ENCODE measurements at regions of chr5 and their contacts with region 1.

Region 1: GRCh38 chr5:59039296-59040023 is 456.6 kb downstream of the RAB3C start:
- DNase-seq: peak; percentile 90 to 94 (median 91)
- H3K4me3 ChIP-seq: peak overlapping the region; percentile 84 to 93
- H3K4me3 Mint-ChIP-seq: peak overlapping the region; percentile 89 to 98 (median 96)
- H3K27ac ChIP-seq: peak overlapping the region; percentile 81
- H3K27ac Mint-ChIP-seq: peak overlapping the region; percentile 96 to 99 (median 99)
- H3K4me1 ChIP-seq: peaks cover 64% of the 10 kb centered on the region
- H3K4me1 Mint-ChIP-seq: peaks cover 39 to 79% (median 53%) of the 10 kb centered on the region in 4 donors
- H3K27me3 ChIP-seq: no peaks in the 10 kb centered on the region
- H3K27me3 Mint-ChIP-seq: no peaks in the 10 kb centered on the region

Region 2: GRCh38 chr5:59025734-59026133 is 13.7 kb before region 1 on chr5:
- CTCF ChIA-PET with region 1: interaction called, 4 read pairs
- POLR2A ChIA-PET with region 1: interaction called, 4 read pairs
- intact Hi-C with region 1: loop called (anchors 1 kb)
- DNase-seq: no peak
- H3K4me3 ChIP-seq: no peak overlapping the region
- H3K4me3 Mint-ChIP-seq: no peak overlapping the region
- H3K27ac ChIP-seq: no peak overlapping the region
- H3K27ac Mint-ChIP-seq: peak overlapping the region in 1 of 7 donors; percentile 33
- H3K4me1 ChIP-seq: peaks cover 39% of the 10 kb centered on the region
- H3K4me1 Mint-ChIP-seq: peaks cover 37 to 78% (median 45%) of the 10 kb centered on the region in 4 donors
- H3K27me3 ChIP-seq: no peaks in the 10 kb centered on the region
- H3K27me3 Mint-ChIP-seq: no peaks in the 10 kb centered on the region

Region 3: DNA sequence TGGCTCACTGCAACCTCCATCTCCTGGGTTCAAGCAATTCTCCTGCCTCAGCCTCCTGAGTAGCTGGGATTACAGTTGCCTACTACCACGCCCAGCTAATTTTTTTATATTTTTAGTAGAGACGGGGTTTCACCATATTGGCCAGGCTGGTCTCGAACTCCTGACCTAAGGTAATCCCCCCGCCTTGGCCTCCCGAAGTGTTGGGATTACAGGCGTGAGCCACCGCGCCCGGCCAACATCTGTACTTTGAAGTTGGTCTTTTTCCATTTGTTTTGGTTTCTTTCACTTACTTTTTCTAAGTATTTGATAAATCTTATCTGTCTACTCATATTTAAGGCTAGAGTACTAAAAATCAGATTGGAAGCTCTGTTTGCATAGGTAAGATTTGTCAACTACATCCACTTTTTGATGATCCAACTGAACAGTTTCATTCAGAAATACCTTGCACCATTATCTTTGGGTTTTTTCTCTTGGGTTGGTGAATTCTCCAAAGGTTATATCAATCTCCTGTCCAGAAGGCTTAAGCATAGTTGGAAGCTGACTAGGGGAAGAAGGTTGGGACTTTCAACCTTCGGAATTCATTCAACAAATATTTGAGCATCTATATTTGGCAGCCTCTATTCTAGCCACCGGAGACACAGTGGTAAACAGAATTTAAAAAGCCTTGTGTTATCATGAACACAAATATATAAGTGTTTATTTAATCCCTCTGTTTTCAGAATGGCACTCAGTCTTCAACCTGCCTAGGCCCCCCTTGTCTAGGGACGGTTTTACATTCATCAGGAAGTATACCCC is 32.5 kb after region 1 on chr5:
- CTCF ChIA-PET with region 1: no interaction called
- POLR2A ChIA-PET with region 1: no interaction called
- intact Hi-C with region 1: no loop called
- DNase-seq: no peak
- H3K4me3 ChIP-seq: no peak overlapping the region
- H3K4me3 Mint-ChIP-seq: no peak overlapping the region
- H3K27ac ChIP-seq: no peak overlapping the region
- H3K27ac Mint-ChIP-seq: no peak overlapping the region
- H3K4me1 ChIP-seq: no peaks in the 10 kb centered on the region
- H3K4me1 Mint-ChIP-seq: no peaks in the 10 kb centered on the region
- H3K27me3 ChIP-seq: no peaks in the 10 kb centered on the region
- H3K27me3 Mint-ChIP-seq: peaks cover 3 to 6% of the 10 kb centered on the region in 2 donors

Region 4: GRCh38 chr5:59099270-59099994 is 60.0 kb after region 1 on chr5:
- CTCF ChIA-PET with region 1: interaction called, 4 read pairs
- POLR2A ChIA-PET with region 1: interaction called, 12 read pairs
- intact Hi-C with region 1: loop called (anchors 1 kb)
- DNase-seq: peak; percentile 59 to 82 (median 76)
- H3K4me3 ChIP-seq: no peak overlapping the region
- H3K4me3 Mint-ChIP-seq: peak overlapping the region in 7 of 8 donors; percentile 18 to 57 (median 49)
- H3K27ac ChIP-seq: peak overlapping the region; percentile 33
- H3K27ac Mint-ChIP-seq: peak overlapping the region; percentile 31 to 94 (median 83)
- H3K4me1 ChIP-seq: peaks cover 30% of the 10 kb centered on the region
- H3K4me1 Mint-ChIP-seq: peaks cover 15 to 42% (median 31%) of the 10 kb centered on the region in 4 donors
- H3K27me3 ChIP-seq: no peaks in the 10 kb centered on the region
- H3K27me3 Mint-ChIP-seq: no peaks in the 10 kb centered on the region

Region 5: DNA sequence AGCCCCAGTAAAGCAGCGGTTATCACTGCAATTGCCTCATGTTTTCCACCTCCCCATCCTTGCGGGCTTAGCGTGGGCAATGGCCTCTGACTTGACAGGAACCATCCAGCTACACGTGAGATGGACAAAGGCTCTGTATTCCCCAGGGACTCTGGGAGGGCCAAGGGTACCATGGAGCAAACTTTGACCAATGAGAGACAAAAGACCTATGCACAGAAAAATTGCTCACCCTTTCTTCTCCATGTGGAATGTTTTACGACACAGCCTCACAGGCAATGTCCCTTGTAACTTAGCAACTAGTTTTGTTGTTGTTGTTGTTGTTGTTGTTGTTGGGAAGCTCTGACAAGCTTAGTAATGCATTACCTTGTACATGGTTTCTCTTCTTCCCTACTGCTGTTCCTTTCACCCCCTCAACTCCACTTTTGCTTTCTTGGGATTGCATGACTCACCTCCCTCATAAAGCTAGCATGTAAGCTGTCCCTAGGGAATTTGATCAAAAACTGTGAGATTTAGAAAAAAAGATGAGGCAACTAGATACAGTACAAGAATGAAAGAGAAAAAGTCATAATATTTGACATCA is 94.3 kb after region 1 on chr5:
- CTCF ChIA-PET with region 1: interaction called, 45 read pairs
- POLR2A ChIA-PET with region 1: interaction called, 156 read pairs
- intact Hi-C with region 1: no loop called
- DNase-seq: no peak
- H3K4me3 ChIP-seq: no peak overlapping the region
- H3K4me3 Mint-ChIP-seq: peak overlapping the region in 1 of 8 donors; percentile 43
- H3K27ac ChIP-seq: no peak overlapping the region
- H3K27ac Mint-ChIP-seq: peak overlapping the region in 6 of 7 donors; percentile 59 to 95 (median 86)
- H3K4me1 ChIP-seq: peaks cover 34% of the 10 kb centered on the region
- H3K4me1 Mint-ChIP-seq: peaks cover 10 to 45% (median 13%) of the 10 kb centered on the region in 4 donors
- H3K27me3 ChIP-seq: no peaks in the 10 kb centered on the region
- H3K27me3 Mint-ChIP-seq: peaks cover 0 to 2% of the 10 kb centered on the region in 2 donors

Region 6: DNA sequence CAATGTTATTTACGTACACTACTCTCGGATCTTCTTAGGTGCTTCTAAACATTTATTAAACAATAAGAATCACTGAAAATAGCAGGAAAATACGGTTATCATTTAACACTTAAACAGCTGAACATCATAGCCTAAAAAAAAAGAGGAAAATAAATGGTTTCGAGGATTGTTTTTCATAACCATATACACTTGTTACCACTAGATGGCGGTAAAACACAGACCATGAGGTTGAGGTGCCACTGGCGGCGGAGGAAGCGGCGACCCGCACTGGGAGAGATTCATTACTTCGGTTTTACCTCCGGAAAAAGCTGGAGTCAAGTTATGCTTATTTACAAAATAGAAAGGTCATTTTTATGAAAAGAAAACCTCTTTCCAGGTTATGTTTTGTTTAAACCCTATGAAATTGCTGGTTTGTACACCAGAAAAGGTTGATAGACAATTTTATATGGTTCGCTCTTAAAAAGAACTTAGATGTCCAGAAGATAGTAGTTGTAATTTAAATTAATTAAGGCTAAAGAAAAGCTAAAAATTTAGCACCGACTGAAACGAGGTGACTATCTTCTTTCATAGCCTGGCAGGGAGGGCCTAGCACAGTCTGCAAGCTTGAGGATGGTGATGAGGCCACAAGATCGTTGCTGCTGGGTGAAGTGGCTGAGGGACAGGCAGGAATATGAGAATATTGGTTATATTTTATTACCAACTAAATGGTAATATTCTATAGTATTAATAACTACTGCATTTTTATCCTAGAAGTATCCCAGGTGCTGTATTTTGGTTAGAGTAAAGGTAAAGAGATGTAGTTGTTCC is 149.2 kb after region 1 on chr5:
- CTCF ChIA-PET with region 1: interaction called, 17 read pairs
- POLR2A ChIA-PET with region 1: interaction called, 3 read pairs
- intact Hi-C with region 1: no loop called
- DNase-seq: peak; percentile 55 to 68 (median 66)
- H3K4me3 ChIP-seq: no peak overlapping the region
- H3K4me3 Mint-ChIP-seq: peak overlapping the region in 2 of 8 donors; percentile 23 to 58
- H3K27ac ChIP-seq: no peak overlapping the region
- H3K27ac Mint-ChIP-seq: no peak overlapping the region
- H3K4me1 ChIP-seq: peaks cover 5% of the 10 kb centered on the region
- H3K4me1 Mint-ChIP-seq: peaks cover 3 to 5% (median 4%) of the 10 kb centered on the region in 4 donors
- H3K27me3 ChIP-seq: no peaks in the 10 kb centered on the region
- H3K27me3 Mint-ChIP-seq: peaks cover 13 to 15% of the 10 kb centered on the region in 2 donors

Region 7: DNA sequence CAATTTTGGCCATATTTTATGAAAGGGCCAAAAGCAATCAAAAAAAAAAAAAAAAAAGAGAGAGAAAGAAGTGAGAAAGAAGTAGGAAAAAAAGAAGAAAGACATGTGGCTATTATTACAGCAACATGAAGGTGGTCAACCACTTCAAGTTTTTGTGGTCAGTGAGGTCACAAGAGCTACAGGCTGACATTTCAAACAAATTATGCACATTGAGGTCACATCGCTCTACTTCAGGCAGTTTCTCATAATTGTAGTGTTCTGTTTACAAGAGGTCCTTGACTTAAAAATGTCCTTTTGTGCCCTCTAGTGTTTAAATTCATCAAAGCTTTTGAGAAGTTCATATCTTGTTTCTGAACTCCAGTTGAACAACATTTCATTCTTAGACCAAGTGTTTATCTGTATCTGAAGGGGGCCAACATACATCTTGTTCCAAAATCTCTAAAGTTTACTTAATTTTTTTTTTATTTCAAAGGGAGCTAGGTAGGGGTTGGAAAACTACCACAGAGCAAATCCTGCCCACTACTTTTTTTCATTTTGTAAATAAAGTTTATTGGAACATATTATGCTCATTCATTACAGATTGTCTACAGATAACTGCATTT is 341.0 kb after region 1 on chr5:
- CTCF ChIA-PET with region 1: no interaction called
- POLR2A ChIA-PET with region 1: no interaction called
- intact Hi-C with region 1: loop called (anchors 5 kb)
- DNase-seq: peak in 4 of 5 donors; percentile 27 to 41 (median 34)
- H3K4me3 ChIP-seq: no peak overlapping the region
- H3K4me3 Mint-ChIP-seq: no peak overlapping the region
- H3K27ac ChIP-seq: no peak overlapping the region
- H3K27ac Mint-ChIP-seq: no peak overlapping the region
- H3K4me1 ChIP-seq: no peaks in the 10 kb centered on the region
- H3K4me1 Mint-ChIP-seq: peaks cover 0 to 4% (median 3%) of the 10 kb centered on the region in 4 donors
- H3K27me3 ChIP-seq: no peaks in the 10 kb centered on the region
- H3K27me3 Mint-ChIP-seq: peaks cover 0 to 3% of the 10 kb centered on the region in 2 donors

Measured in CD4-positive, alpha-beta memory T cell (primary cell).